Psoas muscle (tissue), 8 donors: ENCODE measurements at regions of chr15 and their contacts with region 1.

Region 1: GRCh38 chr15:62306851-62307504 is 141.9 kb upstream of the C2CD4B start:
- DNase-seq: peak in 1 of 2 donors; percentile 35
- ATAC-seq: peak; percentile 76 to 90 (median 87)
- H3K4me3 ChIP-seq: no peak overlapping the region
- H3K27ac ChIP-seq: no peak overlapping the region
- H3K4me1 ChIP-seq: peaks cover 3% of the 10 kb centered on the region
- H3K27me3 ChIP-seq: peaks cover 0 to 9% (median 0%) of the 10 kb centered on the region in 3 donors
- CTCF ChIP-seq: peak; percentile 69

Region 2: GRCh38 chr15:61871926-61872522 is 435.0 kb before region 1 on chr15:
- intact Hi-C with region 1: loop called in 1 of 2 experiments (anchors 2 kb)
- DNase-seq: no peak
- ATAC-seq: peak in 2 of 4 donors; percentile 43
- H3K4me3 ChIP-seq: no peak overlapping the region
- H3K27ac ChIP-seq: no peak overlapping the region
- H3K4me1 ChIP-seq: no peaks in the 10 kb centered on the region
- H3K27me3 ChIP-seq: no peaks in the 10 kb centered on the region
- CTCF ChIP-seq: peak; percentile 60

Region 3: GRCh38 chr15:61889706-61890105 is 417.3 kb before region 1 on chr15:
- intact Hi-C with region 1: no loop called
- DNase-seq: no peak
- ATAC-seq: no peak
- H3K4me3 ChIP-seq: no peak overlapping the region
- H3K27ac ChIP-seq: no peak overlapping the region
- H3K4me1 ChIP-seq: no peaks in the 10 kb centered on the region
- H3K27me3 ChIP-seq: no peaks in the 10 kb centered on the region
- CTCF ChIP-seq: no peak

Region 4: DNA sequence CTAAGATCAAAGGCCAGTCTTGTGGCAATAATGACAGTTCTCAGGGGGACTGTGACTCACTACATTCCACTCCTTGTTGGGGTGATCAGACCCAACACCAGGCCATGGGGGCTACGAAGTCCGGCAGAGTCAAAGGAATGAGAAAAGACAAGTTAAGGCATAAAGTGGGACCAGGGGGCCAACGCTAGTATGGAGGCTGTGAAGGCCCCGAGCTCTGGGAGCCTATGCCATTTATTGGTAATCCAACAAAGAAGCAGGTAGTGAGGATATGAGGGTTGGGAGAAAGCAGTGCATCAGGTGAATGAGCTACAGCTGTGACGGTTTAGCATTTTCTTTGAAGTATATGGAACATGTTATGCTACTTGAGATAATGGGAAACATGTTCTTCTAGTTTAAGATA is 37.5 kb before region 1 on chr15:
- intact Hi-C with region 1: no loop called
- DNase-seq: no peak
- ATAC-seq: no peak
- H3K4me3 ChIP-seq: no peak overlapping the region
- H3K27ac ChIP-seq: no peak overlapping the region
- H3K4me1 ChIP-seq: no peaks in the 10 kb centered on the region
- H3K27me3 ChIP-seq: no peaks in the 10 kb centered on the region
- CTCF ChIP-seq: no peak

Region 5: GRCh38 chr15:62344806-62345539 is 38.0 kb after region 1 on chr15:
- intact Hi-C with region 1: no loop called
- DNase-seq: no peak
- ATAC-seq: no peak
- H3K4me3 ChIP-seq: no peak overlapping the region
- H3K27ac ChIP-seq: no peak overlapping the region
- H3K4me1 ChIP-seq: no peaks in the 10 kb centered on the region
- H3K27me3 ChIP-seq: no peaks in the 10 kb centered on the region
- CTCF ChIP-seq: peak; percentile 38

Region 6: GRCh38 chr15:62841269-62841628 is 534.3 kb after region 1 on chr15:
- intact Hi-C with region 1: no loop called
- DNase-seq: no peak
- ATAC-seq: no peak
- H3K4me3 ChIP-seq: no peak overlapping the region
- H3K27ac ChIP-seq: no peak overlapping the region
- H3K4me1 ChIP-seq: peaks cover 13% of the 10 kb centered on the region
- H3K27me3 ChIP-seq: no peaks in the 10 kb centered on the region
- CTCF ChIP-seq: no peak